ENCODE measurements at regions of chr1 and their contacts with region 1.

Region 1: DNA sequence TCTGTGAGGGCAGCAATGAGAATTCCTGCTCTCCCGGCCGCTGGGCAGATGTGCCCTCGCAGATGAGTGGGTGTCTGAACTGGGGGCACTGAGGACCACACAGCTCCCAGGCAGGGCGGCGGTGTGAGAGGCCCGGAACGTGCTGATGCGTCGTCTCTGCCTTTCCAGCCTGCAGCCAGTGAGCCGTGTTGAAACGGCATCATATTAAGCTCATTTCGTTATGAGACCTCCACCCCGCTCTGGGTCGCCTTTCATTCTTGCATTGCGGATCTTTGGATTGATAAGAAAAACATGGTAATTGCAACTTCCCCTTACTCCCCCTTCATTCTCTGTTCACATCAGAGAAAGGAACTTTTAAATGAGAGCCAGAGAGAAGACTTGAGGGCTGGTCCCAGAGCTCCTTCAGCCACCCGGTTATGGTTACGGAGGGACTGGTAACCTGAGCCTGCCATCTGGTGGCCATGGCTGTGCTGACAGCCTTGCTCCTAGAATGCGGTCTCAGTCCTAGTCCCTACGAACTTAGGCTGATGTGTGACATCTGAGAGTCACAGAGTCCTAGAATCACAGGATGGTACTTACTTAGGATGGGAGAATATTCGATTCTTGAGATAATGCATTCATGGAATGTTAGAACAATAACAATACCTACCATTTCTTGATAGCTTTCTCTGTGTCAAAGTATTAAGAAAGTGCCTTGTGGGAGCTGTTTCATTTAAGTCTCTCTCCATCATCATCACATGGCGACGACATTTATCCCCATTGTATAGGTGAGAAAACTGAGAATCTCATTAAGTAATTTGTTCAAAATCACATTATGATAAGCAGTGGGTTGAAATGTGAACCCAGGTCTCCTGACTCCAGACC is 271.0 kb downstream of the TRABD2B start:
- DNase-seq: peak; percentile 81
- CTCF ChIP-seq: peak; percentile 85

Region 2: DNA sequence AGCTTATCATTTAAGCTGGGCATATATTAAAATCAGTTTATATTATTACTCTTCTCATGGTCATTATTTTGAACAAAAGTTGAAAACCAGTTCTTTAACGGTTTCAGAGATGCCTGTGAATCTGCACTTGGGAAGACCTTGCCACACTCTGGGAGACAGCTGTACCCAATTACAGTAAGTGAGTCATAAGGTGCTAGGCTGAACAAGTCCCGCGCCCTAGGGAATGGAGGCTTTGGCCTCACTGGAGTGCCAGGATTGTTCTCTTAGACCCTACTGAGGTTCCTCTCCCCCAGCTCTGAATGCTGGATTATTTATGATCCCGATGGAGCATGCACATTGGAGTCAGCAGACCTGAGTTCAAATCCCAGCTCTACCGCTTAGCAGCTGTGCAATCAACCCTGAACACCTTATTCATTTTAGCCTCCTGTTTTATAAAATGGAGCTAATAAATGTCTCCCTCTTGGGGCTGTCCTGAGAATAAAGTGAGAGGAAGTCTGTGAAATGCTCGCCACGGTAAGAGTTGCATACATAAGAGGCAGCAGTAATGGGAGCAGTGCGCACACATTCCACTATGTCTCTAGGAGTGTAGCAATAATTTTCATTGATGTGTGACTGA is 22.1 kb before region 1 on chr1:
- CTCF ChIA-PET with region 1: interaction called, 13 read pairs
- POLR2A ChIA-PET with region 1: no interaction called
- DNase-seq: no peak
- CTCF ChIP-seq: no peak

Region 3: GRCh38 chr1:47738560-47739182 is 12.4 kb after region 1 on chr1:
- CTCF ChIA-PET with region 1: interaction called, 28 read pairs
- POLR2A ChIA-PET with region 1: no interaction called
- DNase-seq: no peak
- CTCF ChIP-seq: peak; percentile 46

Region 4: GRCh38 chr1:47755101-47755990 is 29.1 kb after region 1 on chr1:
- CTCF ChIA-PET with region 1: interaction called, 20 read pairs
- POLR2A ChIA-PET with region 1: no interaction called
- DNase-seq: peak; percentile 73
- CTCF ChIP-seq: peak; percentile 68

Measured in GM10248 (cell line).